B cell (primary cell): ENCODE measurements at regions of chr17 and their contacts with region 1.

Region 1: DNA sequence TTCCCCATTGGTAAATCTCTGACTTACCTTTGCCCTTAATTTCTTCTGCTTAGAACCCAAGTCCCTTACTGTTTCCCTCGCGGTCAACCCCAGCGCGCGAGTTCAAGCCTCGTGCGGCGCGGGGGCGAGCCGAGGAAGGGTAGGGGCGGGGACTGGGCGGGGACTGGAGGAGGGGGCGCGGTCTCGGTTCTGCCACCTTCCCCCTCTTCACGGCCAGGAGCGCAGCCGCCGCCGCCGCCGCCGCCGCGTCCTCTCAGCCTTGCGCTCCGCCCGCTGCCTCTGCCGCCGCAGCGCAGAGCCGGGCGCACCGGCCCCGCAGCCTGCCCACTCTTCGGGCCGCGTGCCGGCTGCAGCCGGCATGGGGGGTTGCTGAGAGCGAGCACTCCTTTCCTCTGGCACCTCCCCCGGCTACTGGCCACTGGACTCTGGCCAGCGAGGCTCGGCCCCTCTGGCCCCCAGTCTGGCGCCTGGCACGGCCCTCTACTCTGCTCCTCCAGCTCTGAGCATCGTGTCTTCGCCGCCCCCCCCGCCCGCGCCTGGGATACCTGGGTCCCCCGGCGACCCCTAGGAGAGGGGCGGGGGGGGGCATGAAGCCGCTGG is at the start of gene RAPGEFL1:
- DNase-seq: peak; percentile 88
- ATAC-seq: peak; percentile 99
- H3K4me3 ChIP-seq: peak within 1 kb of the TSS in 4 of 5 experiments; percentile 42 to 66 (median 59)
- H3K4me3 Mint-ChIP-seq: peak within 1 kb of the TSS; percentile 77
- H3K27ac ChIP-seq: no peak within 1 kb of the TSS
- H3K27ac Mint-ChIP-seq: no peak within 1 kb of the TSS
- H3K4me1 ChIP-seq: peaks cover 17% of the 10 kb centered on the region in 2 donors
- H3K4me1 Mint-ChIP-seq: peaks cover 11% of the 10 kb centered on the region
- H3K27me3 ChIP-seq: peaks cover 0 to 7% (median 2%) of the 10 kb centered on the region in 4 experiments
- H3K27me3 Mint-ChIP-seq: no peaks in the 10 kb centered on the region
- CTCF ChIP-seq: no peak
- total RNA-seq, gene RAPGEFL1: 5.4 and 5.6 TPM in 2 replicates

Region 2: DNA sequence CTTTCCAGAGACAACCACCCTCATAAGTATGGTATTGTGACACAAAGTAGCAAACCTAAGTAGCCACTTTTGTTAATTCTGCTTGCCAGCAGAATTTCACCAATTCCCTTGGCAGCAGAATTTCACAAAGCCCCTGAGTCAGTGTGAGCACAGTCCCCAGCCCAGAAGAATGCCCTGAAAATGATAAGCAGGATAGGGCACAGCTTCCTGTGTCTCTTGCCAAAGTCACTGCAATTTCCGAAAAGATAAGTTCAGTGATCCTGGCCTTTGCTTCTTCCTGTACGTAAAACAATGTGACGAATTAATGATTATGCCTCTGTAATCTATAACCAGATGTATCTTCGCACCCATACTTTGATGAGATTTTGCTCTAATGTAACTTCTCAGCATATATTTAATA is 25.8 kb after region 1 on chr17:
- CTCF ChIA-PET with region 1: no interaction called
- POLR2A ChIA-PET with region 1: no interaction called
- intact Hi-C with region 1: loop called (anchors 1 kb)
- DNase-seq: no peak
- ATAC-seq: no peak
- H3K4me3 ChIP-seq: no peak overlapping the region
- H3K4me3 Mint-ChIP-seq: no peak overlapping the region
- H3K27ac ChIP-seq: no peak overlapping the region
- H3K27ac Mint-ChIP-seq: no peak overlapping the region
- H3K4me1 ChIP-seq: no peaks in the 10 kb centered on the region
- H3K4me1 Mint-ChIP-seq: no peaks in the 10 kb centered on the region
- H3K27me3 ChIP-seq: peaks cover 0 to 4% (median 0%) of the 10 kb centered on the region in 4 experiments
- H3K27me3 Mint-ChIP-seq: peaks cover 9% of the 10 kb centered on the region
- CTCF ChIP-seq: no peak

Region 3: GRCh38 chr17:40242774-40243173 is 65.4 kb after region 1 on chr17:
- CTCF ChIA-PET with region 1: no interaction called
- POLR2A ChIA-PET with region 1: no interaction called
- intact Hi-C with region 1: no loop called
- DNase-seq: no peak
- ATAC-seq: no peak
- H3K4me3 ChIP-seq: no peak overlapping the region
- H3K4me3 Mint-ChIP-seq: no peak overlapping the region
- H3K27ac ChIP-seq: no peak overlapping the region
- H3K27ac Mint-ChIP-seq: no peak overlapping the region
- H3K4me1 ChIP-seq: no peaks in the 10 kb centered on the region
- H3K4me1 Mint-ChIP-seq: peaks cover 31% of the 10 kb centered on the region
- H3K27me3 ChIP-seq: no peaks in the 10 kb centered on the region
- H3K27me3 Mint-ChIP-seq: no peaks in the 10 kb centered on the region
- CTCF ChIP-seq: no peak